Mammary epithelial cell (primary cell): ENCODE measurements at regions of chr1 and their contacts with region 1.

Region 1: GRCh38 chr1:161382214-161383019 is 14.7 kb upstream of the CFAP126 start:
- DNase-seq: peak; percentile 80
- H3K4me3 ChIP-seq: peak overlapping the region in 2 of 3 experiments; percentile 5 to 26
- H3K27ac ChIP-seq: peak overlapping the region; percentile 91
- H3K4me1 ChIP-seq: peaks cover 20% of the 10 kb centered on the region
- H3K27me3 ChIP-seq: no peaks in the 10 kb centered on the region
- CTCF ChIP-seq: peak; percentile 47 to 63

Region 2: DNA sequence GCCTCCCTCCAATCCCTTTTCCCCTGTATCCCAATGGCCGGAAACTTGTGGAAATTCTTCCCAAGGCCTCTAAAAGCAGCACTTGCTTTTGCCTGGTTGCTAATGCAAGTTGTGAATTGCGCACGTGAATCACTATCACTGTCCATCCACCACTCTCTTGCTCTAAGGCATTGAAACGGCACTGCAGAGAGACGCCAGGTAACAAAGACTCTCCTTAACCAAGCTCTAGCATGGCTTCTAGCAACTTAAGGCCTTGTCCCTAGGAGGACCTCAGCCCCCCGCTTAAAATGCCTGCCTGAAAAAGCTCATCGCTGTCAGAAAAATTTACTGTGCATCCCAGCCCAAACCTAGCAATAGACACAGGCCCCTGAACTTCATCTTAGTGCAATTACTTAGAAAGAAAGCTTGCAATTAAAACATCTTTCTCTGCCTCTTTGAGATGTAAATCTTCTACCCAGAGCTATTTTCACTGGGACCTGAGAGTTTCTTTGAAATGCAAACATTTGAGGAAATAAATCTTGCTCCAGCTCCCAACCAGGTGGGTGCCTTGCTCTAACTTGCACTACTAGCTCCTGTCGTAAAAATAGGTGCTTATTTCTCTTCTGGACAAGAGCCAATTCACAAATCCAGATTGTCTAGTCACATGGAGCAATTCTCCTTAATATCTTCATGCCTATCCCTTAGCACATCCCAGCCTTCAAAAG is 394.9 kb before region 1 on chr1:
- CTCF ChIA-PET with region 1: no interaction called
- dilution Hi-C with region 1: no loop called
- in situ Hi-C with region 1: no loop called
- intact Hi-C with region 1: no loop called
- DNase-seq: no peak
- H3K4me3 ChIP-seq: no peak overlapping the region
- H3K27ac ChIP-seq: no peak overlapping the region
- H3K4me1 ChIP-seq: no peaks in the 10 kb centered on the region
- H3K27me3 ChIP-seq: no peaks in the 10 kb centered on the region
- CTCF ChIP-seq: no peak

Region 3: GRCh38 chr1:161117759-161118581 is 264.4 kb before region 1 on chr1 and contains the starts of genes NIT1 and PFDN2:
- CTCF ChIA-PET with region 1: no interaction called
- dilution Hi-C with region 1: no loop called
- in situ Hi-C with region 1: no loop called
- intact Hi-C with region 1: no loop called
- DNase-seq: peak; percentile 85
- H3K4me3 ChIP-seq: peak within 1 kb of the TSS; percentile 70 to 96 (median 81)
- H3K27ac ChIP-seq: peak within 1 kb of the TSS; percentile 98
- H3K4me1 ChIP-seq: peaks cover 38% of the 10 kb centered on the region
- H3K27me3 ChIP-seq: no peaks in the 10 kb centered on the region
- CTCF ChIP-seq: no peak
- total RNA-seq, gene NIT1: 31.3 to 51.1 TPM
- total RNA-seq, gene PFDN2: 34.2 to 141 TPM

Region 4: DNA sequence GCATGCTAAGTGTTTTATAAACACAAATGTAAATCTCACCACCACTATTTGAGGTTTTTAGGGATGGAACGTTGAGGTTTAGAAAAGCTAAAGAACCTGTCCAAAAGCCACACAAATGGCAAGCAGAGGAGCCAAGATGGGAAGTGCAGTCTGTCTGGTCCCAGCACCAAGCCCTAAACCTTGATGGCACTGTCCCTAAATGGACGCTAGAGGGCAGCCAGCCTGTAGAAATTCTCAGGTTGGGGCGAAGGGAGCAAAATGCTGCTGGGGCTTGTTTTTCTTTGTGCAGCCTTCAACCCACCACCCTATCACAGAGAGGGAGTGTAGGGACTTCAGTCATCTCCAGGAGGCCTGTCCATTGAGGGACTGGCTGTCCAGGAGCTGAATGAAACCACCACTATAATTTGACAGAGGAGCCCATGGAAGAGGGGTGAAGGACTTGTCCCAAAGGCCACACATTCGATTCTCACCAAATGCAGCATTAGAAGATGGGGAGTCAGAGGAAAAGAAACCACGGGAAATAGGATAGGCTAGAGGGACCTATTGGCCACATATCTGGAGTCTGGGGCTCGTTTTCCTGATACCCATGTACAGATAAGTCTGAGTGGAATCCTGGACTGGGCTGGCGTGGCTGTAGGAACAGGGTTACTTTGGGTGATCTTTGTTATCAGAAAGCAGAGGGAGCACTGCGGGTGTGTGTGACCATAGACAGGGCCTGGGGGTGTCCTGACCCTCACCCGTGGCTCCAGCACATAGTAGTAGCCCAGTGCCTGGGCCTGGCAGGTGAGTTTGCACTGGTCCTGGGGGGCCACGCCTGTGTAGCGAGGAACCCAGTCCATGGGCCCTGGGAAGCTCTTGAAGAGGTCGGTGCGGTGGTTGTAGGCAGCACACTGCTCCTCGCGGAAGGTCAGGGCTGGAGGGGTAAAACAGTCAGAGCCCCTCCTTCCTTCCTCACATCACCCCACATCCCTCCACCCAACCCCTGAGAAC is 189.6 kb before region 1 on chr1:
- CTCF ChIA-PET with region 1: no interaction called
- dilution Hi-C with region 1: no loop called
- in situ Hi-C with region 1: loop called in 1 of 2 experiments (anchors 10 kb)
- intact Hi-C with region 1: loop called (anchors 1 kb)
- DNase-seq: peak; percentile 48
- H3K4me3 ChIP-seq: no peak overlapping the region
- H3K27ac ChIP-seq: no peak overlapping the region
- H3K4me1 ChIP-seq: peaks cover 1% of the 10 kb centered on the region
- H3K27me3 ChIP-seq: no peaks in the 10 kb centered on the region
- CTCF ChIP-seq: peak; percentile 91 to 94

Region 5: DNA sequence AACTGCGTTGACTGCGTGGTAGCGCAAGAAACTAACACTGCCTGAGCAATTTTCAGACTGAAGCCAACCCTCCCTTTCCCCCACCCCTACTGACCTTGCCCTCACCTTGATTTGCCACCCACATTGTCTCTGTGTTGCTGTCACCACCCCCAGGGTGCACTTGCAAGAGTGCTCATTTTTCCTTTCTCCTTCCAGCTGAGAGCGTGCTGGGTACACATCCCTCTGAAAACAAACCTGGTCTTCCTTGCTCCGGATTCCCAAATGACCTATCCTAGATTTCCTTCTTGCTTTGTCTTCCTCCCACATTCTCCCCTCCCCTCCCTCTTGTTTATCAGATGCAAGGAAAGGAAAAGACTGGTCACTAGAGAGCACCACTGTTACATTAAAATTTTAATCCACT is 96.9 kb before region 1 on chr1:
- CTCF ChIA-PET with region 1: no interaction called
- dilution Hi-C with region 1: no loop called
- in situ Hi-C with region 1: no loop called
- intact Hi-C with region 1: no loop called
- DNase-seq: no peak
- H3K4me3 ChIP-seq: no peak overlapping the region
- H3K27ac ChIP-seq: no peak overlapping the region
- H3K4me1 ChIP-seq: no peaks in the 10 kb centered on the region
- H3K27me3 ChIP-seq: no peaks in the 10 kb centered on the region
- CTCF ChIP-seq: no peak

Region 6: GRCh38 chr1:161314201-161314981 is 68.0 kb before region 1 on chr1 and contains the start of gene SDHC:
- CTCF ChIA-PET with region 1: no interaction called
- dilution Hi-C with region 1: no loop called
- in situ Hi-C with region 1: no loop called
- intact Hi-C with region 1: loop called (anchors 1 kb)
- DNase-seq: peak; percentile 77
- H3K4me3 ChIP-seq: peak within 1 kb of the TSS; percentile 75 to 92 (median 88)
- H3K27ac ChIP-seq: peak within 1 kb of the TSS; percentile 93
- H3K4me1 ChIP-seq: peaks cover 14% of the 10 kb centered on the region
- H3K27me3 ChIP-seq: no peaks in the 10 kb centered on the region
- CTCF ChIP-seq: peak; percentile 53 to 67
- total RNA-seq, gene SDHC: 26.0 to 180 TPM

Region 7: DNA sequence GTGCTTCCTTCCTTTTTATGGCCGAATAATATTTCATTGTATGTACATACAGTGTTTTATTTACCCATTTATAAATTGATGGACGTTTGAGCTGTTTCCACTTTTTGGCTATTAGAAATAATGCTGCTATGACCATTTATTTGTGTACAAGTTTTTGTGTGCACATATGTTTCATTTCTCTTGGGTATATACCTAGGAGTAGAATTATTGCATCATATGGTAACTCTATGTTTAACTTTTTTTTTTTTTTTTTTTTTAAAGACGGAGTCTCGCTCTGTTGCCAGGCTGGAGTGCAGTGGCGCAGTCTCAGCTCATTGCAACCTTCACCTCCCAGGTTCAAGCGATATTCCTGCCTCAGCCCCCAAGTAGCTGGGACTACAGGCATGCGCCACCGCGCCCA is 49.3 kb before region 1 on chr1:
- CTCF ChIA-PET with region 1: interaction called, 22 read pairs
- dilution Hi-C with region 1: no loop called
- in situ Hi-C with region 1: no loop called
- intact Hi-C with region 1: no loop called
- DNase-seq: no peak
- H3K4me3 ChIP-seq: no peak overlapping the region
- H3K27ac ChIP-seq: no peak overlapping the region
- H3K4me1 ChIP-seq: peaks cover 8% of the 10 kb centered on the region
- H3K27me3 ChIP-seq: no peaks in the 10 kb centered on the region
- CTCF ChIP-seq: no peak

Region 8: DNA sequence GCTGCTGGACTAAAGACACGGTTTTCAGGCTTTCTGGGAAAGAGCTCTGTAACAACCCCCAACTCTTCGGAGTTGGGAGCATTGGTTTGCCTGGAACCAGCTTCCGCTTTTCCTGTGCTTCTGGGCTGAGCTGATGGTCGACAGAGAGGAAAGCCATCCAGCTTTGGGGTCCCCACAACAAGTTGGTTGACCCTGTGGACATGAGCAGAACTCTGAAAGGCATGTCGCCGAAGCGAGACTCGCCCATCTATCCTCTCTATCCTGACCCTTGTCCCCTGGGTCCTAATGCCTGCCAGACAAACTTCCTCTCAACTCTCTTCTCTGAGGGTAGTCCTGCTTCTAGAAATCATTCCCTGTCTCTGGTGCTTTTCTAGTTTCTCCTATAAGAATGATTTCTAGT is 90.9 kb after region 1 on chr1:
- CTCF ChIA-PET with region 1: no interaction called
- dilution Hi-C with region 1: no loop called
- in situ Hi-C with region 1: no loop called
- intact Hi-C with region 1: no loop called
- DNase-seq: no peak
- H3K4me3 ChIP-seq: no peak overlapping the region
- H3K27ac ChIP-seq: no peak overlapping the region
- H3K4me1 ChIP-seq: no peaks in the 10 kb centered on the region
- H3K27me3 ChIP-seq: no peaks in the 10 kb centered on the region
- CTCF ChIP-seq: no peak